PC-9 (cell line): ENCODE measurements at regions of chr16 and their contacts with region 1.

Region 1: GRCh38 chr16:78443542-78444364 is 344.3 kb downstream of the WWOX start:
- DNase-seq: no peak
- H3K4me3 ChIP-seq: no peak overlapping the region
- H3K27ac ChIP-seq: no peak overlapping the region
- H3K4me1 ChIP-seq: no peaks in the 10 kb centered on the region
- H3K27me3 ChIP-seq: no peaks in the 10 kb centered on the region
- CTCF ChIP-seq: no peak

Region 2: GRCh38 chr16:77965346-77965745 is 478.4 kb before region 1 on chr16:
- CTCF ChIA-PET with region 1: interaction called, 11 read pairs
- POLR2A ChIA-PET with region 1: no interaction called
- intact Hi-C with region 1: no loop called
- DNase-seq: no peak
- H3K4me3 ChIP-seq: no peak overlapping the region
- H3K27ac ChIP-seq: no peak overlapping the region
- H3K4me1 ChIP-seq: no peaks in the 10 kb centered on the region
- H3K27me3 ChIP-seq: peaks cover 34% of the 10 kb centered on the region
- CTCF ChIP-seq: no peak

Region 3: GRCh38 chr16:78407191-78407590 is 36.6 kb before region 1 on chr16:
- CTCF ChIA-PET with region 1: no interaction called
- POLR2A ChIA-PET with region 1: no interaction called
- intact Hi-C with region 1: no loop called
- DNase-seq: no peak
- H3K4me3 ChIP-seq: no peak overlapping the region
- H3K27ac ChIP-seq: no peak overlapping the region
- H3K4me1 ChIP-seq: no peaks in the 10 kb centered on the region
- H3K27me3 ChIP-seq: no peaks in the 10 kb centered on the region
- CTCF ChIP-seq: no peak

Region 4: DNA sequence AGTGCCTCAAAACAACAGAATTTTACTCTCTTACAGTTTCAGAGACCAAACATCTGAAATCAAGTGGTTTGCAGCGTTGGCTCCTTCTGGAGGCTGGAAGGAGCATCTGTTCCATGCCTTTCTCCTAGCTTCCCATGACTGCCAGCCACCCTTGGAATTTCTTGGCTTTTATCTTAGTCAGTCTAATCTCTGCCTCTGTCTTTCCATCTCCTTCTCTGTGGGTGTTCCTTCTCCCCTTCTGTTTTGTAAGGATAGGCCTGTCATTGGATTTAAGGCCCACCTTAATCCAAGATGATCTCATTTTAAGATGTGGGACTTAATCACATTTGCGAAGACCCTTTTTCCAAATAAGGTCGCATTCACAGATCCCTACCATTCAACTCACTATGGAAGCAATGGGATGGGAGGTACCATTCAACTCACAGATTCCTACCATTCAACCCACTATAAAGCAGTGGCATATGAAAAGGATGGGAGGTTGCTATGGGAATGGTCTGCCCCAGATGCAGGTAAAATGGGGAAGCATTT is 22.5 kb before region 1 on chr16:
- CTCF ChIA-PET with region 1: no interaction called
- POLR2A ChIA-PET with region 1: no interaction called
- intact Hi-C with region 1: no loop called
- DNase-seq: no peak
- H3K4me3 ChIP-seq: no peak overlapping the region
- H3K27ac ChIP-seq: no peak overlapping the region
- H3K4me1 ChIP-seq: no peaks in the 10 kb centered on the region
- H3K27me3 ChIP-seq: no peaks in the 10 kb centered on the region
- CTCF ChIP-seq: no peak